ENCODE measurements at regions of chr12 and their contacts with region 1.

Region 1: DNA sequence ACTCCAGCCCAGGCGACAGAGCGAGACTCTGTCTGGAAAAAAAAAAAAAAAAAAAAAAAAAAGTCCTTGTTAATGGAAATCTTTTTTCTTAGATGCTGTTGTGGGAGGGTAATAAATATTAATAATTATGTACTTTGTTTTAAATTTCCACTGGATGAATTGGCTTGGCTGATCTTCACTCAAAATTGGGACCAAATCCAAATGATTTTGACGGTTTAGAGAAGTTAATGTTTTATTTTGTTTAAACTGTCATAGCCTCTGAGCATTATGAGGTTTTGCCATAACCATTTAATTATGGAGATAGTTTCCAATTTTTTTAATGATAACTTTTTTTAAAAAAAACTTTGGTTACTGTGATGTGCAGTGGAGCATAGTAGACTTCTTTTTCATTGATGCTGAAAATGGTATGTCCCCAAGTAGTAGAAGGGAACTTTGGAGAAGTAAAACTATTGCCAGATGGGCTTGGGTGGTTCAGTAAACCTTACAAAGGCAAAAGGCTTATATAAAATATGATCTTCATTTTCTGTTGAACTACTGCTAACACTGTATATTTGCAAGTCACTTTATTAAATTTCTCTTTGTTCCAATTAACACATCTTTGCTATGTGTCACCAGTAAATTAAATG is 3.9 kb upstream of the PMCH start:
- DNase-seq: no peak
- ATAC-seq: no peak
- H3K4me3 ChIP-seq: no peak overlapping the region
- H3K27ac ChIP-seq: no peak overlapping the region
- H3K4me1 ChIP-seq: no peaks in the 10 kb centered on the region
- H3K27me3 ChIP-seq: no peaks in the 10 kb centered on the region

Region 2: GRCh38 chr12:102498471-102498870 is 296.9 kb after region 1 on chr12:
- intact Hi-C with region 1: loop called in 1 of 2 experiments (anchors 10 kb)
- DNase-seq: no peak
- ATAC-seq: no peak
- H3K4me3 ChIP-seq: no peak overlapping the region
- H3K27ac ChIP-seq: no peak overlapping the region
- H3K4me1 ChIP-seq: no peaks in the 10 kb centered on the region
- H3K27me3 ChIP-seq: no peaks in the 10 kb centered on the region